IMR-90 (cell line): ENCODE measurements at regions of chr20 and their contacts with region 1.

Region 1: DNA sequence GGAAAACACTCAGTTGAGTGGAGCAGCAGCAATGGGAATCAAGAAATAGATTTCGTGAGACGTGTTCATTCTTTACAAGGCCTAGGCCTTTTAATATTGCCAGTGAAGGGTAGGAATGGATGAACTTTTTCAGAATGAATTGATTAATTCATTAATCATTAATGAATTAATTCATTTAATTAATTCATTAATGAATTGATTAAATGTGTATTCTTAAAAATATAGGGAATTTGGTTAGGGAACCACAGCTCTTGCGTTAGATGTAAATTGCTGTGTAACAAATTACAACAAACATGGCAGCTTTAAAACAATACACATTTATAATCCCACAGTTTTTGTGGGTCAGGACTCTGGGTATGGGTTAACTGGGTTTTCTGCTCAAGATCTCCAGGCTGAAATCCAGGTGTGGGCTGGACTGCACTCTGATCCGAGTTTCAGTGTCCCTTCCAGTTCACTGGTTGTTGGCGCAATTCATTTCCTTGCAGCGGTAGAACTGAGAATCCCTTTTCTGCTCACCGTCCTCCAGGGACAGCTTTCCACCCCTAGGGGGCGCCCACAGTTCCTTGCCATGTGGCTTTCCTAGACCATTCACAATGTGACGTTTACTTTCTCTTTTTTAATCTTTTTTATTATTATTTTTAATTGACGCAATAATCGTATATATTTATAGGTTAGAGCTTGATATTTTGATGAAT is 32.8 kb upstream of the BCAS1 start:
- DNase-seq: peak; percentile 64
- ATAC-seq: peak; percentile 86
- H3K4me3 ChIP-seq: no peak overlapping the region
- H3K27ac ChIP-seq: no peak overlapping the region
- H3K4me1 ChIP-seq: no peaks in the 10 kb centered on the region
- H3K27me3 ChIP-seq: peaks cover 2% of the 10 kb centered on the region; the same call in 1 of the 2 replicates
- CTCF ChIP-seq: peak; percentile 89
- POLR2A ChIP-seq: no peak
- RAD21 ChIP-seq: peak; percentile 77

Region 2: GRCh38 chr20:54633374-54634355 is 530.5 kb after region 1 on chr20:
- CTCF ChIA-PET with region 1: no interaction called
- POLR2A ChIA-PET with region 1: no interaction called
- dilution Hi-C with region 1: no loop called
- in situ Hi-C with region 1: loop called (anchors 10 kb)
- intact Hi-C with region 1: no loop called
- DNase-seq: no peak
- ATAC-seq: no peak
- H3K4me3 ChIP-seq: no peak overlapping the region
- H3K27ac ChIP-seq: no peak overlapping the region
- H3K4me1 ChIP-seq: no peaks in the 10 kb centered on the region
- H3K27me3 ChIP-seq: no peaks in the 10 kb centered on the region
- CTCF ChIP-seq: no peak
- POLR2A ChIP-seq: no peak
- RAD21 ChIP-seq: no peak